Endothelial cell of umbilical vein (primary cell): ENCODE measurements at regions of chr17 and their contacts with region 1.

Region 1: DNA sequence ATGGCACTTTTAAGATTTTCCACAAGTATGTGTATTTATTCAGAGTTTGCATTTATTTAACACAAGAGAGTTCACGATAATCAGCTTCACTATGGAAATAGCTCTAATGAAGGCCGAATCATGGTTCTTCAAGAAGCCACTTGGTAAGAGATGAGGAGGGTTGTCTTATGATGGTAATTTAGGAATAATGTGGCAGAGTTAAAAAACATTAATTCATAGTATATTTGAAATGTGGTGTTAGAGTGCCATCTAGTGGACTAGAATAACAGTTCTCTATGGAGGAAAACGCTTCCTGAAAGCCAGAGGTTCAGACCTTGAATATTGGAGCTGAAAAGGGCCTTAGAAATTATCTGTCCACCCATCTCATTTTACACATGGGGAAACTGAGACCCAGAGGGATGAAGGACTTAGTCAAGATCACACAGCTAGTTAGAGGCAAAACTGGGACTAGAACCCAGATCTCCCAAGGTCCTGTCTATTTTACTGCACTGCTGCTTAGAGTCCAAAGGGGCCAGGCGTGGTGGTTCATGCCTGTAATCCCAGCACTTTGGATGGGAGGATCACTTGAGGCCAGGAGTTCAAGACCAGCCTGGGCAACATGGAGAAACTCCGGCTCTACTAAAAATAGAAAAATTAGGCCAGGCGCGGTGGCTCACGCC is 33.8 kb upstream of the KPNB1 start:
- DNase-seq: peak; percentile 61
- H3K4me3 ChIP-seq: no peak overlapping the region
- H3K27ac ChIP-seq: no peak overlapping the region
- H3K4me1 ChIP-seq: no peaks in the 10 kb centered on the region
- H3K27me3 ChIP-seq: no peaks in the 10 kb centered on the region
- CTCF ChIP-seq: peak; percentile 38 to 40
- POLR2A ChIP-seq: no peak

Region 2: GRCh38 chr17:47162013-47162622 is 453.8 kb before region 1 on chr17:
- CTCF ChIA-PET with region 1: interaction called, 3 read pairs
- POLR2A ChIA-PET with region 1: no interaction called
- dilution Hi-C with region 1: no loop called
- intact Hi-C with region 1: loop called (anchors 10 kb)
- DNase-seq: peak; percentile 68
- H3K4me3 ChIP-seq: no peak overlapping the region
- H3K27ac ChIP-seq: no peak overlapping the region
- H3K4me1 ChIP-seq: no peaks in the 10 kb centered on the region
- H3K27me3 ChIP-seq: no peaks in the 10 kb centered on the region
- CTCF ChIP-seq: no peak
- POLR2A ChIP-seq: no peak

Region 3: DNA sequence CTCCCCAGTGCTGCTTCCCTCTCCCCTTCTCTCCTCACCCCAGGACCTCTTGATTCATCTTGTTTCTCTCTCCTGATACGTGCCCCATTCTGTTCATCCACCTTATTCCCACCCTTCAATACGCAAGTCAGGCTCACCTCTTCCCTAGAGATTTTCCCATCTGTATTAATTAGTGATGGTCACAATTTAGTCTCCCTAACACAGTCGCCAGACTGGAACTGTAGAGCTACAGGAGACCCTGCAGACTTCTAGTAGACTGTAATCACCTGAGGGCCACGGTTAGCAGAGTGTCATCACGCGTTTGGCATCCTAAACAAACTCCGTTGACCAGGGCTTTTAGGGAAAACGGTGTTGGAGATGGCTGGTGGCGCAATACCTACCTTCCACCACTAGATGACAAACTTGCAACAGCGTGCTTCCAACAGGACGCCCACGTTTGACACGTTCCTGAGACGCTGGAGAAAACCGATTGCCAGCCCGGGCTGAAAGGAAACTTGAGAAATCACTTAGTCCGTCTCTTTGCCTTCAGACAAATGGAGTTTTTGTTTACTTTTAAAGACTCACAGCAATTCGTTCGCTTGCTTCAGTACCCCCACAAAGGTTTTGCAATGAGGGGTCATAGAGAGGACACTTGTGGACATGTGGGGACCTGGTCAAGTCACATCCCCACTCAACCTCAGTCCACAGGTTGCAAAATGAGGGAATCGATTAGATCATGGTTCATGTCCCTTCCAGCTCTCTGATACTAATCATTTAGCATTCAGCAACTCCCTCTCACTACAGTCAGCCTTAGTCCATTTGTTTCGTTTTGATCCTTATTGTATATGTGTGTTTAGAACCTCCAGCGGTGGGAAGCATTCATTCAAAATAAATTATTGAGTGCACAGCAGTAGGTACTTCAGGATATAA is 386.1 kb before region 1 on chr17:
- CTCF ChIA-PET with region 1: interaction called, 4 read pairs
- POLR2A ChIA-PET with region 1: no interaction called
- dilution Hi-C with region 1: no loop called
- intact Hi-C with region 1: loop called (anchors 2 kb)
- DNase-seq: peak; percentile 93
- H3K4me3 ChIP-seq: no peak overlapping the region
- H3K27ac ChIP-seq: peak overlapping the region; percentile 38
- H3K4me1 ChIP-seq: peaks cover 30% of the 10 kb centered on the region
- H3K27me3 ChIP-seq: no peaks in the 10 kb centered on the region
- CTCF ChIP-seq: peak; percentile 98 to 99
- POLR2A ChIP-seq: peak; percentile 55

Region 4: GRCh38 chr17:47323382-47324222 is 292.3 kb before region 1 on chr17 and contains the start of gene EFCAB13:
- CTCF ChIA-PET with region 1: interaction called, 6 read pairs
- POLR2A ChIA-PET with region 1: no interaction called
- dilution Hi-C with region 1: no loop called
- intact Hi-C with region 1: loop called (anchors 5 kb)
- DNase-seq: peak; percentile 94
- H3K4me3 ChIP-seq: peak within 1 kb of the TSS; percentile 71 to 89 (median 73)
- H3K27ac ChIP-seq: peak within 1 kb of the TSS; percentile 53
- H3K4me1 ChIP-seq: peaks cover 15% of the 10 kb centered on the region
- H3K27me3 ChIP-seq: no peaks in the 10 kb centered on the region
- CTCF ChIP-seq: peak in 1 of 2 donors; percentile 13
- POLR2A ChIP-seq: peak; percentile 95
- total RNA-seq, gene EFCAB13: 8.3 and 12.9 TPM in 2 replicates

Region 5: GRCh38 chr17:47363171-47363570 is 252.7 kb before region 1 on chr17:
- CTCF ChIA-PET with region 1: interaction called, 8 read pairs
- POLR2A ChIA-PET with region 1: no interaction called
- dilution Hi-C with region 1: no loop called
- intact Hi-C with region 1: loop called (anchors 1 kb)
- DNase-seq: no peak
- H3K4me3 ChIP-seq: no peak overlapping the region
- H3K27ac ChIP-seq: no peak overlapping the region
- H3K4me1 ChIP-seq: no peaks in the 10 kb centered on the region
- H3K27me3 ChIP-seq: no peaks in the 10 kb centered on the region
- CTCF ChIP-seq: no peak
- POLR2A ChIP-seq: no peak

Region 6: DNA sequence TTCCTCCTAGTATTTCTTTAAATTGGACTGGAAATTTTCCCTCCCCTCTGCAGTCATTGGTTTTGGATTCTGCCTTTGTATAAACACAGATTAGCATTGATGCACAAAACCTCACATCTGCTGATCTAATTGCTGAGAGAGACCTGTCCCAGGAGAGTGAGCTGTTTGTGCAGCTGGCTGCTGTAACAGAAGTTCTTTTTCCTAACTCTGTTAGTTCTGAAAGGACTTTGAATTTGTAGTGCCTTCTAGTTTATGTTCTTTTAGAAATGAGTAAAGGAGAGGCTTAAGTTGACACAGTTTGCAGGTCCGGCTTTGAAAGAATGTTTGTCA is 11.3 kb before region 1 on chr17:
- CTCF ChIA-PET with region 1: interaction called, 43 read pairs
- POLR2A ChIA-PET with region 1: no interaction called
- dilution Hi-C with region 1: no loop called
- intact Hi-C with region 1: no loop called
- DNase-seq: peak; percentile 30
- H3K4me3 ChIP-seq: no peak overlapping the region
- H3K27ac ChIP-seq: peak overlapping the region; percentile 34
- H3K4me1 ChIP-seq: peaks cover 9% of the 10 kb centered on the region
- H3K27me3 ChIP-seq: no peaks in the 10 kb centered on the region
- CTCF ChIP-seq: no peak
- POLR2A ChIP-seq: no peak